ENCODE measurements at regions of chr6 and their contacts with region 1.

Region 1: GRCh38 chr6:85449818-85450759 is at the start of gene NT5E:
- DNase-seq: peak; percentile 3 to 67 (median 57)
- H3K4me3 ChIP-seq: peak within 1 kb of the TSS; percentile 64
- H3K4me3 Mint-ChIP-seq: peak within 1 kb of the TSS; percentile 90 to 97 (median 95)
- H3K27ac ChIP-seq: peak within 1 kb of the TSS; percentile 58
- H3K27ac Mint-ChIP-seq: peak within 1 kb of the TSS; percentile 55 to 95 (median 90)
- H3K4me1 ChIP-seq: peaks cover 25% of the 10 kb centered on the region
- H3K4me1 Mint-ChIP-seq: peaks cover 54 to 72% (median 67%) of the 10 kb centered on the region in 3 donors
- H3K27me3 ChIP-seq: peaks cover 13% of the 10 kb centered on the region
- H3K27me3 Mint-ChIP-seq: peaks cover 28 to 38% of the 10 kb centered on the region in 2 donors
- total RNA-seq, gene NT5E: 14.8 to 15.4 TPM

Region 2: DNA sequence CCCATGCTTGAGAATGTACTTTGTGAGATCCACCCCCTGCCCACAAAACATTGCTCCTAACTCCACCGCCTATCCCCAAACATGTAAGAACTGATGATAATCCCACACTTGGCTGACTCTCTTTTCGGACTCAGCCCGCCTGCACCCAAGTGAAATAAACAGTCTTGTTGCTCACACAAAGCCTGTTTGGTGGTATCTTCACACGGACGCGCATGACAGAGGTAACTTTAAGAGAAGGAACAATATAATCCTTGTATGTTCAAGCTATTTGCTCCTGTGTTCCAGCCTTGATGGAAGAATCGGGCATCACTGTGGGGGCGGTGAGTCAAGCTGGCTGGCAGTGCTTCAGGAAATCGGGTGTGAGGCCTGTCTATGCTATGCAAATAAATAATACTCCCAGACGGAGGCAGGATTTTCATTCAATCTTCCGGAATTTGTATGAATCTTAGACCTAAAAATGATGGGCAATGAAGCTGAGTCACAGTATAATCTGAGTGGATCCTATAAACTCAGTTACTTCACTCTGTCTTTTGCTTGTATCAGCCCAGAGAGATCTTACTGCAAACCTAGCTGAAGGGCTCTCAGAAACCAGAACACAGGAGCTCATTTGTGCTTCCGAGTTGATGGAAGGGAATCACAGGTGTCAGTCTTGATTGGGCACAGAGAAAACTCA is 45.5 kb before region 1 on chr6:
- CTCF ChIA-PET with region 1: interaction called, 10 read pairs
- POLR2A ChIA-PET with region 1: interaction called, 8 read pairs
- DNase-seq: no peak
- H3K4me3 ChIP-seq: no peak overlapping the region
- H3K4me3 Mint-ChIP-seq: peak overlapping the region in 4 of 7 donors; percentile 1 to 42 (median 24)
- H3K27ac ChIP-seq: no peak overlapping the region
- H3K27ac Mint-ChIP-seq: peak overlapping the region; percentile 21 to 90 (median 63)
- H3K4me1 ChIP-seq: no peaks in the 10 kb centered on the region
- H3K4me1 Mint-ChIP-seq: peaks cover 38 to 76% (median 58%) of the 10 kb centered on the region in 3 donors
- H3K27me3 ChIP-seq: no peaks in the 10 kb centered on the region
- H3K27me3 Mint-ChIP-seq: no peaks in the 10 kb centered on the region

Region 3: DNA sequence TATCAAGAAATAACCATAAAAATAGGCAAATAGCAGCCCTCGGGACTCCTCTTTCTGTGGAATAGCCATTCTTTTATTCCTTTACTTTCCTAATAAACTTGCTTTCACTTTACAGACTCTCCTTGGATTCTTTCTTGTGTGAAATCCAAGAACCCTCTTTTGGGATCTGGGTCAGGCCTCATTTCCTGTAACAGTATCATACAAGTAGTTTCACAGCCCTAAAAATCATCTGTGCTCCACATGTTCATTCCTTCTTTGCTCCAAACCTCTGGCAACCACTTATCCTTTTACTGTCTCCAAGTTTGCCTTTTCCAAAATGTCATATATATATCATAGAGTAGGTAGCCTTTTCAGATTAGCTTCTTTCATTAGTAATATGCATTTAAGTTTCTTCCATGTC is 13.7 kb before region 1 on chr6:
- CTCF ChIA-PET with region 1: interaction called, 11 read pairs
- POLR2A ChIA-PET with region 1: interaction called, 11 read pairs
- DNase-seq: no peak
- H3K4me3 ChIP-seq: no peak overlapping the region
- H3K4me3 Mint-ChIP-seq: no peak overlapping the region
- H3K27ac ChIP-seq: no peak overlapping the region
- H3K27ac Mint-ChIP-seq: no peak overlapping the region
- H3K4me1 ChIP-seq: no peaks in the 10 kb centered on the region
- H3K4me1 Mint-ChIP-seq: peaks cover 0 to 4% (median 0%) of the 10 kb centered on the region in 3 donors
- H3K27me3 ChIP-seq: no peaks in the 10 kb centered on the region
- H3K27me3 Mint-ChIP-seq: peaks cover 0 to 4% of the 10 kb centered on the region in 2 donors

Region 4: DNA sequence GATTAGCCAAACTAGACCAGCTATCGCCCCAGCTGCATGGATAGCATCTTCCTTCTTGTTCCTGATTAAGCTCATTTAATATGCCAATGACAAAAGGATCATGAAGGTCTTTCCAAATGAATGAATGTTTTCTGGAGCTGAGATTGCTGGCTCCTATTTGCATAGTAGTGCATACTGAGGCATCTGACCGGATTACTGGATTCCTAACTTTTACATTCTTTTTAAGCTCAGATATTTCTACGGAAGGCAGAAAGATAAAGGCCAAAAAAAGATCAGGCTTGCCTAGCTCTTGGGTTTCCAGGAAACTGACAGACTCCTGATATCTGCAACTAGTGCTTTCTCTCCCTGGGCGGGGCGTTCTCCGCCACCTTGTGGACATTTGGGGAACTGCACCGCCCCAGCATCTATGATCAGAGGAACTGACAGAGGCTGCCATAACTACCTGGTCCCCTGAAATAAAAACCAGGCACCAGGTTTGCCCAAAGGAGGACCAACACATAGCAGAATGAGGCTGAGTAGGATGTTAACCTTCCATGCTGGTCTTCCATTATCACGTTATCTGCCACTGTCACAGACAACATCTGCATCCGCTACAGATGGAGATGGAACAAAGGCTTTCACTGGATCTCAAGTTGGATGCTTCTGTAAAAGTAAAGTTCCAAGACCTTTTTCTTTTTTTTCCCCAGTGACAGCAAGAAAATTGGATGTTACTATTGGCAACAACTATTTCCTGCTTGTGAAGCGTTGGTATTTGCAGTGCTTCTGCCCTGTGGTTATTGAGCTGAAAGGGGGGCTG is 33.0 kb after region 1 on chr6:
- CTCF ChIA-PET with region 1: interaction called, 115 read pairs
- POLR2A ChIA-PET with region 1: interaction called, 5 read pairs
- DNase-seq: peak; percentile 65 to 84 (median 68)
- H3K4me3 ChIP-seq: no peak overlapping the region
- H3K4me3 Mint-ChIP-seq: no peak overlapping the region
- H3K27ac ChIP-seq: no peak overlapping the region
- H3K27ac Mint-ChIP-seq: peak overlapping the region in 2 of 8 donors; percentile 18 to 29
- H3K4me1 ChIP-seq: no peaks in the 10 kb centered on the region
- H3K4me1 Mint-ChIP-seq: peaks cover 12 to 20% (median 15%) of the 10 kb centered on the region in 3 donors
- H3K27me3 ChIP-seq: no peaks in the 10 kb centered on the region
- H3K27me3 Mint-ChIP-seq: peaks cover 2 to 5% of the 10 kb centered on the region in 2 donors

Region 5: GRCh38 chr6:85945459-85946185 is 495.5 kb after region 1 on chr6:
- CTCF ChIA-PET with region 1: no interaction called
- POLR2A ChIA-PET with region 1: interaction called, 16 read pairs
- DNase-seq: no peak
- H3K4me3 ChIP-seq: no peak overlapping the region
- H3K4me3 Mint-ChIP-seq: no peak overlapping the region
- H3K27ac ChIP-seq: no peak overlapping the region
- H3K27ac Mint-ChIP-seq: no peak overlapping the region
- H3K4me1 ChIP-seq: no peaks in the 10 kb centered on the region
- H3K4me1 Mint-ChIP-seq: no peaks in the 10 kb centered on the region
- H3K27me3 ChIP-seq: no peaks in the 10 kb centered on the region
- H3K27me3 Mint-ChIP-seq: peaks cover 0 to 3% of the 10 kb centered on the region in 2 donors

Measured in CD8-positive, alpha-beta memory T cell (primary cell).